ENCODE measurements at regions of chr2 and their contacts with region 1.

Region 1: GRCh38 chr2:43542285-43542937 is 53.4 kb downstream of the THADA start:
- DNase-seq: no peak
- H3K4me3 ChIP-seq: no peak overlapping the region
- H3K27ac ChIP-seq: no peak overlapping the region
- H3K4me1 ChIP-seq: peaks cover 11 to 18% of the 10 kb centered on the region in 2 donors
- H3K27me3 ChIP-seq: no peaks in the 10 kb centered on the region
- CTCF ChIP-seq: peak; percentile 52 to 84 (median 71)
- POLR2A ChIP-seq: no peak

Region 2: DNA sequence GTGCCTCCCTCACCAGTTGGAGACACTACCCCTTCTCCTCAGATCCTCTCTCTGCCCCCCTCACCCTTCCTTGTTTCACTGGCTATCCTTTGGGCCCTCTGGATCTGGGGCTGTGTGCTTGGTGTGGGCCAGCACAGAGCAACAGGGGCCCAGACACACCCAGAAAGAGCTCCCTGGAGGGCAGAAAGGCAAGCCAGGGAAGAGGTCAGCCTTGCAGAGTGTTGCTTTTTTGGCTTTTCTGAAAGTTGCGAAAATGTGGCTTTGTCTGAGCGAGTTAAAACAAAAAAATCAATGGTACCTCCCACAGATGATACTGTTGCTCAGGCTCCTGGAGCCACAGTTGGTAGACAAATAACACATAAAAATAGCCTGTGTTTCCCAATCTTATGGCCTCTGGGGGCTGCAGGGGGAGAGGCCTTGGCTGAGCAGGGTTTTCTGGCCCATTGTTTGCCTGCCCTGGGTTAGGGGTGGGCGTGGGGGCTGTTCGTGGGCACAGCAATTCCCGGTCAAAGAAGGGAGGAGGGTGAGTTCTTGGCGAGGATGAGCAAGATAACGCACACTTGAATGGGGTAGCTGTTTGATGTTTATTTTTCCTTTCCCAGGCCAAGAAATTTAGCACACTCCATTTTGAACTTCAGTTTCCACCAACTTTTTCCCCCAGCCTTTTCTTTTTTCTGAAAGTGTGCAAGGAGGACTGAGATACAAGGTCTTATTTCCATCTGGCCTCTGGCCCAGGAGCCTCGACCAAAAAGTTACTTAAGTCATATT is 583.0 kb before region 1 on chr2:
- intact Hi-C with region 1: loop called in 1 of 2 experiments (anchors 10 kb)
- DNase-seq: peak in 3 of 7 donors; percentile 22 to 47 (median 30)
- H3K4me3 ChIP-seq: no peak overlapping the region
- H3K27ac ChIP-seq: peak overlapping the region in 2 of 5 donors; percentile 74 to 82
- H3K4me1 ChIP-seq: peaks cover 3 to 21% of the 10 kb centered on the region in 2 donors
- H3K27me3 ChIP-seq: no peaks in the 10 kb centered on the region
- CTCF ChIP-seq: no peak
- POLR2A ChIP-seq: no peak

Region 3: GRCh38 chr2:44051593-44052347 is 509.4 kb after region 1 on chr2:
- intact Hi-C with region 1: no loop called
- DNase-seq: no peak
- H3K4me3 ChIP-seq: no peak overlapping the region
- H3K27ac ChIP-seq: no peak overlapping the region
- H3K4me1 ChIP-seq: no peaks in the 10 kb centered on the region
- H3K27me3 ChIP-seq: no peaks in the 10 kb centered on the region
- CTCF ChIP-seq: no peak
- POLR2A ChIP-seq: no peak